Panc1 (cell line): ENCODE measurements at regions of chr17 and their contacts with region 1.

Region 1: DNA sequence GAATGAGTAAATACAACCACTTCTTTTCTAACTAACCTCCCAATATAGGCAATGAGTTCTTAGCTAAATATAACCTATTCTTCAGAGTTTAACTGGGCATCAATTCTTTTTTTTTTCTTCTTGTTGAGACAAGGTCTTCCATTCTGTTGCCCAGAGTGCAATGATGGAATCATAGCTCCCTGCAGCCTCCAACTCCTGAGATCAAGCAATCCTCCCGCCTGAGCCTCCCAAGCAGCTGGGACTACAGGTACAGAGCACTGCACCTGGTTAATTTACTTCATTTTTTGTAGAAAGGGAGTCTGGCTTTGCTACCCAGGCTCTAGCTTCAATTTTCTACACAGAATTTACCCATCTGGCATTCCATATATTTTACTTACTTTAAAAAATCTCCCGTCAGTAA is 1.1 kb downstream of the METTL16 start:
- DNase-seq: no peak
- ATAC-seq: no peak
- H3K4me3 ChIP-seq: peak overlapping the region; percentile 85 to 97
- H3K27ac ChIP-seq: peak overlapping the region; percentile 99
- H3K4me1 ChIP-seq: no peaks in the 10 kb centered on the region
- H3K27me3 ChIP-seq: no peaks in the 10 kb centered on the region
- CTCF ChIP-seq: no peak

Region 2: DNA sequence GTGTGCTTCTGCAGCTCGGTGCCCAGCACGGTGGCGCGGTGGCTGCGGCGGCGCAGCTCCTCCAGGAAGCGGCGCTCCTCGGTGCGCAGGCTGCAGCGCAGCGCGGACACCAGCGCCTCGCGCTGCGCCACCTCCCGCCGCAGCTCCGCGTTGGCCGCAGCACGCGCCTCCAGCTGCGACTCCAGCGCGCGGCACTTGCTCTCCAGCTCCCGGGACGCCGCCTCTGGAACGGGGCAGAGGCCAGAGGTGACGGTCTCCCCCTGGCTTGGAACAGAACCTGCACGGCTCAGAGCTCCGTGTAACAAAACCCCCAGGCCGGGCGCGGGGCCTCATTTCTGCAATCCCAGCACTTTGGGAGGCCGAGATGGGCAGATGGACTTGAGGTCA is 214.2 kb after region 1 on chr17:
- CTCF ChIA-PET with region 1: no interaction called
- POLR2A ChIA-PET with region 1: interaction called, 14 read pairs
- in situ Hi-C with region 1: no loop called
- intact Hi-C with region 1: no loop called
- DNase-seq: no peak
- ATAC-seq: peak; percentile 82
- H3K4me3 ChIP-seq: no peak overlapping the region
- H3K27ac ChIP-seq: no peak overlapping the region
- H3K4me1 ChIP-seq: no peaks in the 10 kb centered on the region
- H3K27me3 ChIP-seq: no peaks in the 10 kb centered on the region
- CTCF ChIP-seq: no peak